Sigmoid colon (tissue), 7 donors: ENCODE measurements at regions of chr11 and their contacts with region 1.

Region 1: GRCh38 chr11:44775366-44775984 is 48.7 kb downstream of the TSPAN18 start:
- DNase-seq: peak; percentile 81
- H3K4me3 ChIP-seq: no peak overlapping the region
- H3K27ac ChIP-seq: peak overlapping the region; percentile 79 to 91 (median 84)
- H3K4me1 ChIP-seq: peaks cover 0 to 75% (median 69%) of the 10 kb centered on the region in 4 donors
- H3K27me3 ChIP-seq: no peaks in the 10 kb centered on the region
- CTCF ChIP-seq: peak in 3 of 4 experiments; percentile 72 to 80 (median 75)
- EP300 ChIP-seq: no peak
- POLR2A ChIP-seq: no peak

Region 2: DNA sequence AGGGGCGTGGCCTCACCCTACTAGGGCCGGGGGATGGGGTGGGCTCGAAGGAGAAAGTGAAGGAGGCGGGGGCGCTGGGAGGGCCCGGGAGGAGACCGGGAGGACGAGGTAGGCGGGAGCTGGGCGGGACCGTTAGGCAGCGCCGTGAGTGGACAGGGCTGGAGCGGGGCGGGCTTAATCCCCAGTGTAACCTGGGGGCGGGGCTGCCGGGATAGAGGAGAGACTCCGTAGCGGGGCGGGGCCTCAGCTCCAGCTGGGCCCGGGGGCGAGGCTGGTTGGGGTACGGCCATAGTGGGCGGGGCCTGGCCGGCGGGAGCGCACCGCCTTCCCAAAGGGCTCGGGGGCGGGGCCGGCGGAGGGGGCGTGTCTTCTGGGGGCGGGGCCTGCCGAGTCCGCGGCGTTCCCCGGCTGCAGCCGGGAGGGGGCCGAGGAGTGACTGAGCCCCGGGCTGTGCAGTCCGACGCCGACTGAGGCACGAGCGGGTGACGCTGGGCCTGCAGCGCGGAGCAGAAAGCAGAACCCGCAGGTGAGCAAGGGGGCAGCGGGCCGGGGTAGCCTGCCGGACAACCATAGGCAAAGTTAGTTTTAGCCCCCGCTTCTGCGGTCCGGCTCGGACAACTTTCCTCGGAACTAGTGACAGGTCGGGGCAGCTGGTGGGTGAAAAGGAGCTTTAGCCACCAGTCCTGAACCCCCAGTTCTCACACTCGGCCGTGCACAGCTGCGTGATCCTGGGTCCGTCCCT is 210.1 kb before region 1 on chr11 and contains the start of gene CD82:
- intact Hi-C with region 1: no loop called
- DNase-seq: peak; percentile 100
- H3K4me3 ChIP-seq: peak within 1 kb of the TSS; percentile 36 to 59 (median 56)
- H3K27ac ChIP-seq: peak within 1 kb of the TSS; percentile 93 to 98 (median 96)
- H3K4me1 ChIP-seq: peaks cover 0 to 57% (median 56%) of the 10 kb centered on the region in 4 donors
- H3K27me3 ChIP-seq: no peaks in the 10 kb centered on the region
- CTCF ChIP-seq: peak in 1 of 4 experiments; percentile 36
- EP300 ChIP-seq: no peak
- POLR2A ChIP-seq: peak; percentile 37 to 61
- total RNA-seq, gene CD82: 8.7 to 23.3 (median 16.8) TPM

Region 3: DNA sequence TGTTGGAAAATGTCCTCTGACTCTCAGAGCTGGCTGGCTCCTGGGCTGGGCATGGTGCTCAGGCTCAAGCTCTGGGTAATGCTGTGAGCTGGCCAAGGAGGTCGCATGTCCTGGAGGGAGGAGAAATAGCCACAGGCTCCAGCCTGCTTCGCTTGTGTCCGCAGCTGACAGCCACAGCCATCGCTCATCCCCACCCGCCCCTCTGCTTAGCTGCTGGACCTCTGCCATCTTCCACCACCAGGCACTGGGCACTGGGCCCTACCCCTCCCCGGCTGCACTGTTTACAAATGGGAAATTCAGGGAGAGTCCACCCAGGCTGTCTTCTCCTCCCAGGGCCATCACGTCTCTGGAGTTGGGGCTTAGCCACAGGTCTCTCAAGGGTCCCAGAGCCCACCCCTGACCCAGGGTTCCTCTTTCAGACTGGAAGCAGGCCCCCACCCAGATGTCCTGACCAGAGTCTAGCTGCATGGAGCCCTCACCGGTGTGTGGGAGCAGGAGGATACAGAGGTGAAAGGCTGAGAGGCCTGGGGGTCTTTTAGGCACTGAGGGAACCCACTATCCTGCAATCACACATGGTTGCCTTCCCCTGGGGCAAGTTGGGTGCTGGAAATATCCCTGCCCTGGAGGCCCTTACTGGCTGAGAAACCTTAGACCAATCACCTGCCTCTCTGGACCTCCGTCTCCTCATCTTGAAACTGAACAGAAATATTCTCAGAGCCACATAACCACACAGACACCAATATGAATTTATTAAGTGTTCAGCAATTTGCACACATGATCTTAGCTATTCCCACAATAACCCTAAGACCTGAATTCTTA is 147.4 kb before region 1 on chr11:
- intact Hi-C with region 1: loop called (anchors 5 kb)
- DNase-seq: peak; percentile 95
- H3K4me3 ChIP-seq: no peak overlapping the region
- H3K27ac ChIP-seq: peak overlapping the region; percentile 70 to 84 (median 80)
- H3K4me1 ChIP-seq: peaks cover 0 to 68% (median 61%) of the 10 kb centered on the region in 4 donors
- H3K27me3 ChIP-seq: no peaks in the 10 kb centered on the region
- CTCF ChIP-seq: no peak
- EP300 ChIP-seq: peak in 1 of 4 donors; percentile 3
- POLR2A ChIP-seq: no peak

Region 4: GRCh38 chr11:44684859-44685281 is 90.6 kb before region 1 on chr11:
- intact Hi-C with region 1: no loop called
- DNase-seq: no peak
- H3K4me3 ChIP-seq: no peak overlapping the region
- H3K27ac ChIP-seq: no peak overlapping the region
- H3K4me1 ChIP-seq: no peaks in the 10 kb centered on the region
- H3K27me3 ChIP-seq: no peaks in the 10 kb centered on the region
- CTCF ChIP-seq: no peak
- EP300 ChIP-seq: no peak
- POLR2A ChIP-seq: no peak

Region 5: DNA sequence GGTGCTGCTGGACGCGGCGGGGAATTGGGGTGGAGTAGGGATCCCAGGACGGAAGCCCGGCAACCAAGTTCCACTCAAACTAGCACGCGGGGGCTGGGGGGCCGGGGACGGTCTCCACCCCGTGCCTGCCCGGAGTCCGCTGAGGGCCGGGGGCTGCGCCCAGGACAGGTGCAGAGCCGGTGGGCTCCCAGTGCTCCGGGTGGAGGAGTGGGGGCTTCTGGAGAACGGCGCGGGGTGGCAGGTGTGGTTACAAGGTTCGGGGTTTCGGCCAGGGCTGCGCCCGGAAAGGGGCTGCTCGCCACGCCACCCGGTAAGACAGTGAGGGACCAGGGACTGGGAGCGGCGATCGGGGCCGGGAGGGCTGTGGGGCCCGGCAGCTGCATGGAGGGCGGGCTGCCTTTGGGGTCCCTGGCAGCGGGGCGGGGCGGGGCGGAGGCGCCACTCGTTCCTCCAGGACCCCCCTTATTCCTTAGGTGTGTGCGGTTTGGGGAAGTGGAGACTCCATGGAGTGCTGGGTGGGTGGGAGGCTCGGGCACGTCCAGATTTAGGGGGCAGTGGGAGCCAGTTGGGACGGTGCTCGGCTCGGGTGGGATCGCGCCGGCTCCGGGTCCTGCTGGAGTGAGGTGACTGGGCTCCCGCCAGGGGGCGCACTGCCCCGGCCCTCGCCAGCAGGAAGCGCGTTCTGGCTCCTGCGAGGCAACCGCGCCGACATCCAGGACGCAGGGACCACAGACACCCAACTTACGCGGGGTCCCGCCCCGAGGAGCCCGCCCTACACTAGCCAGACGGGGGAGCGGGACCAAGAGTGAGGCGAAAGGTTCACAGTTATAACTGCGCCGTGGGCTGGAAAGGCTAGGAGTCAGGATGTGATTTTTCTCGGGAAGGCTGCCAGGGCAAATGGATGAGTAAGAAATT is 47.8 kb before region 1 on chr11:
- intact Hi-C with region 1: loop called (anchors 1 kb)
- DNase-seq: peak; percentile 93
- H3K4me3 ChIP-seq: peak overlapping the region; percentile 72 to 90 (median 82)
- H3K27ac ChIP-seq: peak overlapping the region; percentile 87 to 95 (median 89)
- H3K4me1 ChIP-seq: peaks cover 4 to 56% (median 51%) of the 10 kb centered on the region in 4 donors
- H3K27me3 ChIP-seq: no peaks in the 10 kb centered on the region
- CTCF ChIP-seq: peak; percentile 86 to 96 (median 92)
- EP300 ChIP-seq: no peak
- POLR2A ChIP-seq: peak in 1 of 2 donors; percentile 12

Region 6: GRCh38 chr11:44755556-44756523 is 19.6 kb before region 1 on chr11:
- intact Hi-C with region 1: loop called (anchors 2 kb)
- DNase-seq: peak; percentile 92
- H3K4me3 ChIP-seq: no peak overlapping the region
- H3K27ac ChIP-seq: peak overlapping the region; percentile 80 to 88 (median 85)
- H3K4me1 ChIP-seq: peaks cover 0 to 81% (median 75%) of the 10 kb centered on the region in 4 donors
- H3K27me3 ChIP-seq: no peaks in the 10 kb centered on the region
- CTCF ChIP-seq: no peak
- EP300 ChIP-seq: peak in 2 of 4 donors; percentile 66 to 80
- POLR2A ChIP-seq: no peak

Region 7: GRCh38 chr11:44865866-44866272 is 90.4 kb after region 1 on chr11:
- intact Hi-C with region 1: loop called (anchors 5 kb)
- DNase-seq: peak; percentile 85
- H3K4me3 ChIP-seq: no peak overlapping the region
- H3K27ac ChIP-seq: peak overlapping the region; percentile 91 to 97 (median 95)
- H3K4me1 ChIP-seq: peaks cover 0 to 83% (median 61%) of the 10 kb centered on the region in 4 donors
- H3K27me3 ChIP-seq: no peaks in the 10 kb centered on the region
- CTCF ChIP-seq: no peak
- EP300 ChIP-seq: no peak
- POLR2A ChIP-seq: no peak

Region 8: DNA sequence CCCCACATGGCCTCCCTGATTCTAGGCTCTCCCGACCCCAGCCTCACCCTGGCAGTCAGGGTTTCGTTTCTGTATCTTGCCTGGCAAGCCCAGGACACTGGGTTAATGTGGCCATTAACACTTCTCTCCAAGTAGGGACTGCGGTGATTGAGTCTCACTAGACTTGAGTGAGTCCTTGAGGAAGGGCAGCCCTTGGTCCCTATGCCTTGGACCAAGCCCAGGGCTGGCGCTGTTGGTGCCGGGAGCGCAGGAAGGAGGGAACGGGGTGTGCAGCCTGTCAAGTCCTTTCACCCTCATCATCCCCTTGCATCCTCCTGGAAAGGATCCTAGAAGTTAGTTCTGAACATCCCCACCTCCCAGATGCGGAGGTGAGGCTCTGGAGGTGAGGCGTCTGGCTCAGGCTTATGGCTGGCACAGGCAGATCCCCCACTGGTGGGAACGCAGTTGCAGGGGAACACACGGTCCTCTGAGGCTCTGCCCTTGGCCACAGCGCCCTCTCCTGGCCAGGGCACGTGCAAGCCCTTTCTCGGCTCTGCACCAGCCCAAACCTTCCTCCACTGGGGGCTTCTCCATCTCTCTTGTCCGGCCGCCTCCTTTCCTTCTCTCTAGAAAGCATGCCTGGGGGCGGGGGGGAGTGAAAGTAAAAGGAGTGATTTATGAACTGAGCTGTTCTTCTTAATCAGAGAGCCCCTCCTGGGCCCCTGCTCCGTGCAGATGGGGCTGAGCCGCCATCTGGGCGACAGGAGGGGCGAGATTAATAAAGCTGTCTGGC is 118.6 kb after region 1 on chr11:
- intact Hi-C with region 1: loop called (anchors 2 kb)
- DNase-seq: peak; percentile 91
- H3K4me3 ChIP-seq: peak overlapping the region in 1 of 4 donors; percentile 9
- H3K27ac ChIP-seq: peak overlapping the region; percentile 80 to 89 (median 84)
- H3K4me1 ChIP-seq: peaks cover 0 to 36% (median 24%) of the 10 kb centered on the region in 4 donors
- H3K27me3 ChIP-seq: no peaks in the 10 kb centered on the region
- CTCF ChIP-seq: peak; percentile 86 to 97 (median 92)
- EP300 ChIP-seq: no peak
- POLR2A ChIP-seq: no peak

Region 9: DNA sequence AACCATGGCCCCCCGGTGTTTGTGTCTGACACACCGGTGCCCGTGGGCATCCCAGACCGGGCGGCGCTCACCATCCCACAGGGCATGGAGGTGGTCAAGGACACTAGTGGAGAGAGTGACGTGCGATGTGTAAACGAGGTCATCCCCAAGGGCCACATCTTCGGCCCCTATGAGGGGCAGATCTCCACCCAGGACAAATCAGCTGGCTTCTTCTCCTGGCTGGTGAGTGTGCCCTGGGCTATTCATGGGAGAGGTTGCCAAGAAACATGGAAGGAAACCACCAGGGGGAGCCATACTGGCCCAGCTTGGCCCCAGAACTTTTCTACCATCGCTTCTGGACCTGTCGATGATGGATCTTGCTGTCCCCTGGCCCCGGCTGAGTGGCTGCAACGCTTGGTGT is 407.4 kb after region 1 on chr11:
- intact Hi-C with region 1: no loop called
- DNase-seq: peak; percentile 65
- H3K4me3 ChIP-seq: no peak overlapping the region
- H3K27ac ChIP-seq: peak overlapping the region in 1 of 4 donors; percentile 91
- H3K4me1 ChIP-seq: peaks cover 0 to 39% (median 33%) of the 10 kb centered on the region in 4 donors
- H3K27me3 ChIP-seq: no peaks in the 10 kb centered on the region
- CTCF ChIP-seq: peak in 3 of 4 experiments; percentile 19 to 38 (median 22)
- EP300 ChIP-seq: no peak
- POLR2A ChIP-seq: no peak